ENCODE measurements at regions of chr19 and their contacts with region 1.

Region 1: DNA sequence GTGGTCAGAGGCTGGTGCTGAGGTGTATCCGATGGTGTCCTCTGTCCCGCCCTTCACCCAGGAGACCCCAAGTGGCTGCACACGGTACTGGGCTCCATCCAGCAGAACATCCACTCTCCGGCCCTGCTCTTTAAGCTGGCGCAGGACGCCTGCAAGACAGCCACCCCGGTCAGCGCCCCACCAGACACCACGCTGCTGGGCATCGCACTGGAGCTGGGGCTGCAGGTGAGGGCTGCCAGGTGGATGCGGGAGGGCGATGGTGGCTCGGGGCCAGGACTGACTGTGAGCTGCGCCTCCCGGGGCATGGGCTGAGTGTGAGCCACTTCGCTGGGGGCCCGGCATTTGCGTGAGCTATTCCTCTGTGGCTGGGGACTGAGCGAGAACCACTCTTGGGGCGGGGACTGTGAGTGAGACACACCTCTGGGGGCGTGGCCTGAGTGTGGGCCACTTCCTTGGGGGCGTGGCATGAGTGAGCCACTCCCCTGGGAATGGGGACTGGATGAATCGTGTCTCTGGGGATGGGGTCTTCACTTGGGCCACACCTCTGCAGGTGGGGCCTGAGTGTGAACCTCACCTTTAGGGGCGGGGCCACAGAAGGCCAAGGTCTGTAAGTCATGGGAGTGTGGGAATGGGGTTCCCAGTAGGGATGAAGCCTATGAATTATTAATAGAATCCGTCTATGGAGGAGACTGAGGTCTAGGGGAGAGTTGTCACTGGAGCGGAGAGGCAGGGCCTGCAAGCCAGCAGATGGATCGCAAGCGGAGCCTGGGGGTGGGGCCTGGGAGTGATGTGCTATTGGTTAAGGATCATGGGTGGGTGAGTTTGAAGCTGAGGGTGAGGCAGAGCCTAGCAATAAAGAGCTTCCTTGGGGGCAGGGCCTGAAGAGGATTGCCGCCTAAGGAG is 30.5 kb downstream of the ZSWIM4 start:
- DNase-seq: peak in 1 of 2 experiments; percentile 91
- H3K4me3 ChIP-seq: no peak overlapping the region
- H3K27ac ChIP-seq: no peak overlapping the region
- H3K4me1 ChIP-seq: peaks cover 0 to 2% (median 0%) of the 10 kb centered on the region in 4 experiments; a peak in 2 of 7 replicates
- H3K27me3 ChIP-seq: no peaks in the 10 kb centered on the region
- CTCF ChIP-seq: peak; percentile 34 to 52 (median 35)
- EP300 ChIP-seq: no peak
- POLR2A ChIP-seq: no peak
- RAD21 ChIP-seq: peak in 1 of 2 experiments; percentile 32; a peak in 2 of 4 replicates

Region 2: DNA sequence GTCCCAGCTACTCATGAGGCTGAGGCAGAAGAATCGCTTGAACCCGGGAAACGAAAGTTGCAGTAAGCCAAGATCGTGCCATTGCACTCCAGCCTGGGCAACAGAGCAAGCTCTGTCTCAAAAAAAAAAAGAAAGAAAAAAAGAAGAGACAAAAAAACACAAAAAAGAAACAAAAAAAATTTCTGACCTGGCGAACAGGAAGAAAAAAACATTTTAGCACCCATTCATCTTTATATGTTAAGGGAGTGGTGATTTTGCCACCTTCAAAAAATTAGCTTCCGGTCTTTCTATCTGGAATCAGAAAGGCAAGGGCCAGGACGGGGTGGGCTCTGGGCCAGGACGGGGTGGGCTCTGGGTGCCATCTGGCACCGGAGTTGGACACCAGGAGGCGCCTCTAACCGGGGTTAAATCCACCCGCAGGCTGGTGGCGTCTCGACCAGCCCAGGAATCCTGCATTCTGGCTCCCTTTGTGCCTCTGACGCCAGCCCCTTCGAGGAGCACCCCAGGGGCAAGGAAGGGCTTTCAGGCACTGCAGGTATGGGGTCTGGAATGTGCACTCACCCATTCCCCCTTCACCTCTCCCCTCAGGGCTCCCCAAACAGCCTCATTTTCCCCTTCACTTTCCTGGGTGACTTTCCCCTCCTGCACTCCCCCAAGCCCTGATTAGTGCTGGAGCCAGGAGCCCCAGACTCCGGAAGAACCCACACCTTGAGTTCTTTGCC is 40.8 kb before region 1 on chr19:
- CTCF ChIA-PET with region 1: interaction called, 27 read pairs
- POLR2A ChIA-PET with region 1: interaction called, 5 read pairs
- DNase-seq: peak in 1 of 2 experiments; percentile 88
- H3K4me3 ChIP-seq: peak overlapping the region in 1 of 4 experiments; percentile 7; a peak in 1 of 8 replicates
- H3K27ac ChIP-seq: 0 out of 2 replicates have a peak overlapping the region, but pooled peaks have one; percentile 11
- H3K4me1 ChIP-seq: peaks cover 0 to 3% (median 2%) of the 10 kb centered on the region in 4 experiments; a peak in 4 of 7 replicates
- H3K27me3 ChIP-seq: no peaks in the 10 kb centered on the region; a peak in 2 of 7 replicates
- CTCF ChIP-seq: peak; percentile 65 to 82 (median 80)
- EP300 ChIP-seq: no peak; a peak in 1 of 3 replicates
- POLR2A ChIP-seq: no peak
- RAD21 ChIP-seq: peak; percentile 78 to 82

Region 3: DNA sequence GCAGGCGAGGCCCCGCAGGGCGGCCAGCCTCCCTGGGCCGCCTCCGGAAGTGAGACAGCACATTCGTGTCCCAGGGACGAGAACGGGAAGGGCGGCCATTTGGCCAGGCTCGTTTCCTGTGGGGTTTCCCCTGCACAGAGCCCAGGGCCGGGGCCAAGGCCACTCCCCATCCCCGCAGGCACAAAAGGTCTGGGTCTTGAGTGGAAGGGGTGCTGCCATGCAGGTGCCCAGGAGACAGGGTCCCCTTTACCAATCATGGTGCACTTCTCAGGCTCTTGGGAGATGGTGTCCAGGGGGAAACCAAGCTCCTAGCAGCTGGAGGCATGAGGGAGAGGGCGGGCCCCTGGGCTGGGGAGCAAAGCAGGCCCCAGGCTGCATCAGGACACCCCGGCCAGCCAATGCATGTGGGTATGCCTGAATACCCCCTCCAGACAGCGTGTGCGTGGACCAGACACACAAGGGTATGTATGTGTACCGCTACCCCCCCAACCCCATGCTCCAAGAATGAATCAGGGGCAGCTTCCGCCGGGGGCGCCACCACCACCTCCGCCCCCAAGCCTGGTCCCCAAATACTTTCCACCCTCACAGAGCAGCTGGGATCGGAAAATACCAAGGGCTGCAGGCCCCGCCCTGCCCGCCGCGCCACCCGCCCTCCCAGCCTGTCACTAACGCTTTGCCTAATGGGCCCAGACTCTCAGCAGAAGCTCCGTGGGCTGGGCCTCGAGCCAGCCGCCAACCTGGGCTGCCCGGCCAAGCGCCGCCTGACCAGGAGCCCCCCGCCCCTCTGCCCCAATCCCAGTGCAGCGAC is 13.6 kb after region 1 on chr19:
- CTCF ChIA-PET with region 1: interaction called, 13 read pairs
- POLR2A ChIA-PET with region 1: interaction called, 14 read pairs
- DNase-seq: peak in 1 of 2 experiments; percentile 69
- H3K4me3 ChIP-seq: no peak overlapping the region
- H3K27ac ChIP-seq: peak overlapping the region; percentile 40; the same call in 1 of the 2 replicates
- H3K4me1 ChIP-seq: peaks cover 0 to 34% (median 25%) of the 10 kb centered on the region in 4 experiments; a peak in 6 of 7 replicates
- H3K27me3 ChIP-seq: no peaks in the 10 kb centered on the region
- CTCF ChIP-seq: peak in 2 of 3 experiments; percentile 5 to 11; a peak in 1 of 4 replicates
- EP300 ChIP-seq: no peak
- POLR2A ChIP-seq: no peak
- RAD21 ChIP-seq: no peak

Region 4: GRCh38 chr19:13846557-13847406 is 21.0 kb after region 1 on chr19:
- CTCF ChIA-PET with region 1: interaction called, 7 read pairs
- POLR2A ChIA-PET with region 1: interaction called, 14 read pairs
- DNase-seq: peak in 1 of 2 experiments; percentile 98
- H3K4me3 ChIP-seq: peak overlapping the region; percentile 52 to 78 (median 64); a peak in 7 of 8 replicates
- H3K27ac ChIP-seq: peak overlapping the region; percentile 97
- H3K4me1 ChIP-seq: peaks cover 6 to 38% (median 30%) of the 10 kb centered on the region in 4 experiments
- H3K27me3 ChIP-seq: no peaks in the 10 kb centered on the region
- CTCF ChIP-seq: no peak
- EP300 ChIP-seq: peak in 1 of 2 experiments; percentile 89; a peak in 1 of 3 replicates
- POLR2A ChIP-seq: peak in 1 of 2 experiments; percentile 84; a peak in 2 of 3 replicates
- RAD21 ChIP-seq: no peak

Measured in H1 (cell line).